Vagina (tissue), 2 donors: ENCODE measurements at regions of chr5 and their contacts with region 1.

Region 1: DNA sequence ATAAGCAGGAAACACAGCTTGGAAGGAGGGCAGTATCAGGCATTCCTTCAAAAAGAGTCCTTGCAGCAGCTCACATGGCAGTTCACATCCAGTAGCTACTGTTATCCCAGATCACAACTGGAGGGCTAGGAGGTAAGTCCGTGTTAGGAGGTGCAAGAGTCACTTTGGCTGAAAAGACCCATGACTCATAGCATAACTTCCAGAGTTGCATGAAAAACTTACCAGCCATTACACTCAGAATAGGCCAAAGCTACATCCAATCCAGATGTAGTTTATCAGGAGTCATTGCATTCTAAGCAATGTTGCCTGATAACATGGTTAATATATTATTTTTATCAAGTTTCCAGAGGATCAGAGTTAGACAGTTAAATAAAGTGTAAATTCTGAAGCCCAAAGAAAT is 1126.4 kb upstream of the SEMA6A start:
- DNase-seq: no peak
- H3K4me3 ChIP-seq: no peak overlapping the region
- H3K27ac ChIP-seq: no peak overlapping the region
- H3K4me1 ChIP-seq: no peaks in the 10 kb centered on the region
- H3K27me3 ChIP-seq: no peaks in the 10 kb centered on the region
- CTCF ChIP-seq: no peak
- POLR2A ChIP-seq: no peak

Region 2: DNA sequence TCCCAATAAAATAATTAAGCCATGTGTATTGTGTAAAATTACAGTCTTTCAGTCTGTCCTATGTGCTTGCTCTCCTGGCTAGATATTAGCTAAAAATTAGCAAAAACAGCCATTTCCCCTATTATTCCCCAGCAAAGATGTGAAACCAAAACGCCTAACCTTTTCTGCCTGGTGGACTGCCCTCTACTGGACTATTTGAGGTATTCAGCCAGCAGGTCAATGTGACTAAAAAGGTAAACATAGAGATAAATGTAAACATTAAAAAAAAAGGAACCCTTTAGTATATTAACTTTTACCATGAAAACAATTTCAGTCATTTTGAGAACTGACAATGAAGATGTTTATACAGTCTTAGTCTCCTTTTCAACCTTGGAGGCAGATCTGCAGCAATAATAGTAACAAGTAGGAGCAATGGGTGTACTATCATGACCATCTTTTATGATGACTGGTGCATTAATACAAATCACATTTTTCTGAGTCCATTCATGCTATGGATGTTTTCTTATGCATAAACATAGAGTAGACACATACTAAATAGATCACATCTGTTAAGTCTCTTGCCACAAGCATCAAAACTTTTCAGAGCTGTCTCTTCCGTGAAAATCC is 1869.8 kb before region 1 on chr5:
- intact Hi-C with region 1: loop called (anchors 5 kb)
- DNase-seq: no peak
- H3K4me3 ChIP-seq: no peak overlapping the region
- H3K27ac ChIP-seq: no peak overlapping the region
- H3K4me1 ChIP-seq: no peaks in the 10 kb centered on the region
- H3K27me3 ChIP-seq: no peaks in the 10 kb centered on the region
- CTCF ChIP-seq: peak in 2 of 3 experiments; percentile 34 to 39
- POLR2A ChIP-seq: no peak

Region 3: GRCh38 chr5:117405197-117405596 is 295.9 kb before region 1 on chr5:
- intact Hi-C with region 1: no loop called
- DNase-seq: no peak
- H3K4me3 ChIP-seq: no peak overlapping the region
- H3K27ac ChIP-seq: no peak overlapping the region
- H3K4me1 ChIP-seq: no peaks in the 10 kb centered on the region
- H3K27me3 ChIP-seq: no peaks in the 10 kb centered on the region
- CTCF ChIP-seq: no peak
- POLR2A ChIP-seq: no peak